H1 (cell line): ENCODE measurements at regions of chr12 and their contacts with region 1.

Region 1: DNA sequence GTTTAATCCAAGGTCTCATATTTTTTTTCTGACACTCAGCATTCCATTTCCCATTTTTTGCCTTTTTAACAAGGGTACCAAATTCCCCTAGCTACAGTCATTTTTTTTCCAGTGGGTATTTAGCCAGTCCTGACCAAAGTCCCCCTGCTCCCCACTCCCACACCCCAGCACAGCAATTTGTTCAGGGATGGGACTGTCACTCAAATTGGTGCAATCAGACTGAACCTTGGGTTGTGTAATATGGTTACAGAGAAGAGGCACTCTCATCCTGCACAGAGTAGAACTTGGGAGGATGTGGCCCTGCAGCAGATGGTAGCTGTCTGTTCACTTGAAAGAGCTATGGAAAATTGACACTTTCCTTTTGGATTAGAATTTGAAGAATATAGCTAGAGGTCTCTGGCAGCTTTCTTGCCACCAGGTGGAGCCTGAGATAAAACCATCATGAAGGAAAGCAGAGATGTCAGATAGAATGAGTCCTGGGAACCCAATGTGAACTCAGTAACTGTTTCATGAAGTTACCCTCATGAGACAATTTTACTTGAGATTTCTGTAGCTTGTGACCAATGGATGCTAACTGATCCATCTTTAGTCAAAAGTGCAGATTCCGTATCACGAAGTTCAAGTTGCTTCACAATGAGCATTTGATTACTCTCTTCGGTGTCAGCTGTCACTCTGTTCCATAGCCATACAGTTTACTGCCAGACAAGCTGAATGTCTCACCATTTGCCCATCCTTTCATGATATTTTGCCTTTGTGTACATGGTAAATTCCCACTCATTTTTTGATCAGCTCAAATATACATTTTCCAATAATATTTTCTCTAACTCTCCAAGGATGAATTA is 394.0 kb upstream of the SYT1 start:
- DNase-seq: no peak
- H3K4me3 ChIP-seq: no peak overlapping the region
- H3K27ac ChIP-seq: no peak overlapping the region
- H3K4me1 ChIP-seq: no peaks in the 10 kb centered on the region
- H3K27me3 ChIP-seq: no peaks in the 10 kb centered on the region
- CTCF ChIP-seq: peak in 2 of 3 experiments; percentile 60 to 61; a peak in 2 of 4 replicates
- EP300 ChIP-seq: no peak
- POLR2A ChIP-seq: no peak
- RAD21 ChIP-seq: peak; percentile 67 to 71

Region 2: GRCh38 chr12:78146365-78146772 is 324.2 kb before region 1 on chr12:
- CTCF ChIA-PET with region 1: interaction called, 13 read pairs
- POLR2A ChIA-PET with region 1: no interaction called
- DNase-seq: no peak
- H3K4me3 ChIP-seq: no peak overlapping the region
- H3K27ac ChIP-seq: no peak overlapping the region
- H3K4me1 ChIP-seq: peaks cover 0 to 3% (median 2%) of the 10 kb centered on the region in 4 experiments; a peak in 2 of 7 replicates
- H3K27me3 ChIP-seq: no peaks in the 10 kb centered on the region
- CTCF ChIP-seq: peak in 2 of 3 experiments; percentile 37 to 56; a peak in 2 of 4 replicates
- EP300 ChIP-seq: no peak
- POLR2A ChIP-seq: no peak
- RAD21 ChIP-seq: peak; percentile 65 to 69

Region 3: DNA sequence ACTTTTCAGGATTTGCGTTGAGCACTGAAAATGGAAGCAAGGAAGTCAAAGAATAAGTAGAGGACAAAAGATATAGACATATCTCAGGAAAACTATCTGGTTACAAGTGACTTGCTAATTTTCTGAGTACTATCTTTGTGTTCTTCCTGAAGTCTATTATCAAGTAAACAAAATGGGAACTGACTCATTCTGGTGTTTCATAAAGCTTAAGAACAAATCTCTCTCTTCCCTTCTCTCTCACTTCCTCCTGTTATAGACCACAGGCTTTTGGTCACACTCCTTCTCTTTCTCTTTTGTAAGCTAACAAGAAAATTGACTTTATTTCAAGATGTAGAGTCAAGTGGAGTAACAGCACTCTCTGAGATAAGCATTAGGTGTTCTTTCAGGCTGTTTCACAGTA is 12.6 kb before region 1 on chr12:
- CTCF ChIA-PET with region 1: interaction called, 57 read pairs
- POLR2A ChIA-PET with region 1: no interaction called
- DNase-seq: no peak
- H3K4me3 ChIP-seq: no peak overlapping the region
- H3K27ac ChIP-seq: no peak overlapping the region
- H3K4me1 ChIP-seq: peaks cover 0 to 4% (median 0%) of the 10 kb centered on the region in 4 experiments; a peak in 2 of 7 replicates
- H3K27me3 ChIP-seq: peaks cover 0 to 1% (median 0%) of the 10 kb centered on the region in 4 experiments; a peak in 1 of 7 replicates
- CTCF ChIP-seq: no peak
- EP300 ChIP-seq: no peak
- POLR2A ChIP-seq: no peak
- RAD21 ChIP-seq: no peak

Region 4: DNA sequence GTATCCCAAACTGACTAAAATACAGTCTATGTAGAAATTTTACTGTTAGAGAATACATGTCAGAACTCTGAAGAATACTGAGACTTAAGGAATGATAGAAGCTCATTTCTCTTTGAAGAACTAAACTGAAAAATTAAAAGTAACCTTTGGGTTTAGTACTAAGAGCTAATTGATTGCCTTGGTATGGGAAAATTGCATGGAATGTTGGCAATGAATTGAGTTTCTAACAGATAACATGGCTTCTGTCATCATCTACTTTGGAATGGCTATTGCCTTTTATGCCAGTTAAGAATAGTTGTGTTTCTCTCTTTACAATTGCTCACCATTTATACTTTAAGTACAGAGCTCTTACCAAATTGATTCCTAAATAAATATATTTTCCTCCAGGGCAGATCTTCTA is 85.2 kb after region 1 on chr12:
- CTCF ChIA-PET with region 1: interaction called, 21 read pairs
- POLR2A ChIA-PET with region 1: no interaction called
- DNase-seq: no peak
- H3K4me3 ChIP-seq: no peak overlapping the region
- H3K27ac ChIP-seq: no peak overlapping the region
- H3K4me1 ChIP-seq: no peaks in the 10 kb centered on the region; a peak in 1 of 7 replicates
- H3K27me3 ChIP-seq: no peaks in the 10 kb centered on the region
- CTCF ChIP-seq: no peak
- EP300 ChIP-seq: no peak
- POLR2A ChIP-seq: no peak
- RAD21 ChIP-seq: no peak

Region 5: GRCh38 chr12:78571953-78572352 is 101.4 kb after region 1 on chr12:
- CTCF ChIA-PET with region 1: interaction called, 26 read pairs
- POLR2A ChIA-PET with region 1: no interaction called
- DNase-seq: peak in 1 of 2 experiments; percentile 49
- H3K4me3 ChIP-seq: no peak overlapping the region
- H3K27ac ChIP-seq: no peak overlapping the region
- H3K4me1 ChIP-seq: peaks cover 0 to 3% (median 1%) of the 10 kb centered on the region in 4 experiments; a peak in 2 of 7 replicates
- H3K27me3 ChIP-seq: no peaks in the 10 kb centered on the region; a peak in 1 of 7 replicates
- CTCF ChIP-seq: peak; percentile 27 to 53 (median 46)
- EP300 ChIP-seq: no peak
- POLR2A ChIP-seq: no peak
- RAD21 ChIP-seq: peak; percentile 75 to 77

Region 6: GRCh38 chr12:78622529-78623195 is 152.1 kb after region 1 on chr12:
- CTCF ChIA-PET with region 1: no interaction called
- POLR2A ChIA-PET with region 1: no interaction called
- DNase-seq: no peak
- H3K4me3 ChIP-seq: no peak overlapping the region
- H3K27ac ChIP-seq: no peak overlapping the region
- H3K4me1 ChIP-seq: no peaks in the 10 kb centered on the region
- H3K27me3 ChIP-seq: no peaks in the 10 kb centered on the region
- CTCF ChIP-seq: no peak
- EP300 ChIP-seq: no peak
- POLR2A ChIP-seq: no peak
- RAD21 ChIP-seq: no peak